ENCODE measurements at regions of chr1 and their contacts with region 1.

Region 1: DNA sequence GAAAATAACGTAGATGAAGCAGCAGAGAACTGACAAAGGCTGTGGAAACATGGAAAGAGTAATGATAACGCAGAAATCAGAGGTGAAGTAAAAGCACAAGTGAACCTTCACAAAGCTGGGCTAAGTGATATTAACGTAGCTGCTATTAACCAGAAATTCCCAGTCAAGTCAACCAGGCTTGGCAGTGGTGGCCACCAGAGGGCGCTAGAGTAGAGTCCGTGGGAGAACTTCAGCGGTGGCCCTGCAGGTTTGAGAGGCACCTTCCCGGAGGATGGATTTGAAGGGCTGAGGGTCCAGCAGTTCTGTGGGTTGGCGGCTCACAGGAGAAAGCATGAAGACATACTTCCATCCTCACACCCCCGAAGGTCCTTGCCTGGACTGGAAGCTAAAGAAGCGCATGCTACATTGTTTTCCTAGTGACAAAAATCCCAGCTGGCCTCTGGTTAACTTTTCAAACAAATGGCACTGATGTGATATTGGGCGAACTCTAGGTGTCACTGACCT is 81.7 kb upstream of the ZNF648 start:
- DNase-seq: peak; percentile 94 to 96
- H3K4me3 ChIP-seq: no peak overlapping the region
- H3K27ac ChIP-seq: peak overlapping the region; percentile 92 to 99
- H3K4me1 ChIP-seq: peaks cover 9 to 15% of the 10 kb centered on the region in 2 donors
- H3K27me3 ChIP-seq: no peaks in the 10 kb centered on the region
- CTCF ChIP-seq: peak; percentile 91 to 97 (median 95)
- POLR2A ChIP-seq: peak in 1 of 2 donors; percentile 8

Region 2: GRCh38 chr1:182391362-182392044 is 248.3 kb after region 1 on chr1 and contains the start of gene GLUL:
- intact Hi-C with region 1: loop called (anchors 5 kb)
- DNase-seq: peak; percentile 94 to 95
- H3K4me3 ChIP-seq: peak within 1 kb of the TSS; percentile 81 to 97
- H3K27ac ChIP-seq: peak within 1 kb of the TSS; percentile 98 to 99
- H3K4me1 ChIP-seq: peaks cover 0 to 4% of the 10 kb centered on the region in 2 donors
- H3K27me3 ChIP-seq: no peaks in the 10 kb centered on the region
- CTCF ChIP-seq: peak in 1 of 4 experiments; percentile 3
- POLR2A ChIP-seq: peak; percentile 93 to 99
- total RNA-seq, gene GLUL: 379 to 565 (median 483) TPM

Measured in uterus (tissue), 4 donors.